GM13976 (cell line): ENCODE measurements at regions of chr4 and their contacts with region 1.

Region 1: DNA sequence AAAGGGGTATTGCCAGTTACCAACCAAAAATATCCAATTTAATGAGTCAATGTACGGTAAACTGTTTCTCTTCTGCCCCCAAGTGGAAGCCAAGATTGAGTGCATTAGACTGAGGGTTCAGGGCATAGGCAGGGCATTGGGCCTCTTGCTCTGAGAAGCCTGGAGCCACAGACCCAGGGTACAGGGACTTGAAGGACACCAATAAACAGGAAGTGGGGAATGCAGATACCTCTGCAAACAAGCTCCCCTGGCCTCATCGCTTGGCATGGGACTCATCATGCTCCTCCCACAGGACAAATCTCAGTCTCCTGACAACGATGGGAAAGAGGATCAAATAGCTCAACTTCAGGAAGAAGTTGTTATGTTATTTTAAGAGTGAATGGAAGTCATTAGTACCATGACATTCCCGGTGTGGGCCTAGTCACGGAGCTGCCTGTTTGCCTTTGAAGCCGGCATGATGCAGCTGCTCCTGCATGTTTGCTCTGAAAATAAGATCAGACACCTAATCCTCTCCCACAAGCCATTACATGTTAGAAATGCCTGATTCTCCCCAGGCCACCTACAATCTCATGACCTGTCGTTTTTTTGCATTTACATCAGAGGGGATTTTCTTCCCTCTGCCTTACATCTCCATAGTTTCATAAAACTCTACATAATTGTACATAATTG is 224.2 kb downstream of the RCHY1 start:
- DNase-seq: peak; percentile 6
- CTCF ChIP-seq: peak; percentile 47

Region 2: DNA sequence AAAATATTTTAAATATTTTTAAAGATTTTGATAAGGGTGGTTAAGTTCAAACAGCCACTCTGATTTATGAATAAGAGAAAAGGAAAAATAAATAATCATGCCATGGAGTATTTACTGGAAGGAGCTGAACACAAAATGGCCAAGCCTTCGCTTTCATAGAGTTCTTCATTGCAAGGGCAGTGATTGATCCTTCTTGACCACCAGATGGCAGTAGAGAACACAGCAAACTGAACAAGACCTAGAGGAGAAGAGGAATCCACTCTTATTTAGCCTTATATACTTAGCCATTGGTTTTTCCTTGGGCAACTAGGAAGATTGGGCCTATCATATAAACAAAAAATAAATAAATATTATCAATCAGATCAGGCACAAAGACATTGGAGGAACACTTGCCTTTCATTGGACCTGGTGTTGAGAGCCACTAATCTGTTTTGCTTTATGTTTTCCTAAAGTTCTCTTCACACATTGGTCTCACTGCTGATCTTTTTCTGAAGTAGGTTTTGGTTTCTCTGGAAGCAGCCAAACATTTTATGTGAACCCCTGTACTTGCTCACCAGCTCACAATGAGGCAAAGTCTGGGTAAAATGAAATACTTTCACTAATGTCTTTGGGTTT is 415.2 kb before region 1 on chr4:
- in situ Hi-C with region 1: loop called (anchors 25 kb)
- DNase-seq: peak; percentile 32
- CTCF ChIP-seq: peak; percentile 79

Region 3: DNA sequence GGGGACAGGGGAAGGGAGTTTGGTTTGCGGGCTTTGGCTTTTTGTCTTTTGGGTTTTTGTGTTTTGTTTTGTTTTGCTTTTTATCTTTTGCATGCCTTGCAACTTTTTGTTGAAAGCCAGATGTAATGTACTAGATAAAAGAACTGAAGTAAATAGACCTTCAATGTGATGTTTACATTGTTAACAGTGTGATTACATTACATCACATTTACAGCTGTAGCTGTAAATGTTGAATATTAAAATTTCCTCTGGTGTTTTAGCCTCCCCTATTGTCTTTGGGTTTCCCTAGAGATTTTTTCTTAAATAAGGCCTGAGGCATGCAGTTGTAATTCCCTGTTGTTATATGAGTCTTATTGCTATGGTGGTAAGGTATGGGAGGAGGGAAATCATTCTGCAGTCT is 82.2 kb before region 1 on chr4:
- in situ Hi-C with region 1: no loop called
- DNase-seq: no peak
- CTCF ChIP-seq: no peak